ENCODE measurements at regions of chr21 and their contacts with region 1.

Region 1: DNA sequence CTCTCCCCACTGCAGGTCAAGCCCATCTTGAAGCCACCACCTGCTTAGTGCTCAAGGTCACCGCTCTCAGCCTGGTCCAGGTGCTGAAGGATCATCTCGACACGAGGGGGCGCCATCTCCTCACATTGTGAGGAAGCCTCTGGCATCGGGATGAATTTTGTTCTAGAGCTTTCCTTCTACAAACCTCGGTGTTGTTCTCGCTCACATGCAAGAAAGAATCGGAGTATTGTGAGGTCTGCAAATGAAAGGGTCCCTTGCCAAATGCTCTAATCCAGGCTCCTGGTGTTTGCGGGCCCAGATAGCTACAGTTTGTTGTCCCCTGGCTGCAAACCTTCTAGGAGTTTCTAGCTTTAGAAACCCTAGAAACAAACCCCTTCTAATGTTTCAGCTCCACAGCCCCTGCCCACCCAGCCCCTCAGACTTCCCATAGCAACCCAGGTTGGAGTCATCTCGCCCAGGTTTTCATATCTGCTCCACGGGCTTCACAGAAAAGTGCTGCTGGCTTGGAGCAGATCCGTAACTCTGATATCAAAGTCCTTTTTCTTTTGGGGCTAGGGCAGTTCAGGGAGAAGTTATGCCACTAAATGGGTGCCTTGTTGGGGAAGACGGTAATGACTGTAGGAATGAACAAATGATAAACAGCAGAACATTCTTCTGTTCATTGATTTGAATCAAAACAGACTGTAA is 8.6 kb upstream of the ATP5PO start:
- DNase-seq: peak; percentile 64 to 78
- ATAC-seq: peak; percentile 96 to 99
- H3K4me3 ChIP-seq: peak overlapping the region in 1 of 4 donors; percentile 19
- H3K27ac ChIP-seq: no peak overlapping the region
- H3K4me1 ChIP-seq: peaks cover 5 to 8% of the 10 kb centered on the region in 2 donors
- H3K27me3 ChIP-seq: no peaks in the 10 kb centered on the region
- CTCF ChIP-seq: peak; percentile 85 to 95 (median 91)
- POLR2A ChIP-seq: no peak

Region 2: DNA sequence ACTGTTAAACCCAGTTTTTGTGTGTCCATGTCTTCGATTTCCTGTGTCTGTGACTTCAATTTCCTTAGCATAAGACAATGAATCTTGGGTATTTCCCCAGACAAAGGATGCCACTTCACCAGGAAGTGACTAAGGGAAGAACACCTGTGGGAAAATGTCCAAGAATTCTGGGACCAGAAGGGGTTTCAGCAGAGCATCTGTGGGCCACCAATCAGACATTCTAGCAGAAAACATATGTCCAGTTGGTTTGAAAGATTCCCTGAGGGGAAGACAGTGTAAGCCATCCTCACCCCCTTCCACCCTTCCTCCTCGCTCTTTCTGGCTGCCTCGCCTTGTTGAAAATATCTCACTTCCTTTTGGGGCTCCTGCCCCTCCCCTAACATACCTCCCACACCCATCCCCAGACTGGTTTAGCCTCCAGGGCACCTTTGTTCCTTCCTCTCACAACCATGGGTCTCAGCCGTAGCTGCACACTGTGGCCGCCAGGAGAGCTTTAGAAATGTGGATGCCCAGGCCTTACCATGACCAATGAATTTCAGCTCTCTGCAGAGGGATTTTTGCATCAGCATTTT is 625.0 kb before region 1 on chr21:
- in situ Hi-C with region 1: no loop called
- intact Hi-C with region 1: no loop called
- DNase-seq: no peak
- ATAC-seq: no peak
- H3K4me3 ChIP-seq: no peak overlapping the region
- H3K27ac ChIP-seq: no peak overlapping the region
- H3K4me1 ChIP-seq: peaks cover 5 to 14% of the 10 kb centered on the region in 2 donors
- H3K27me3 ChIP-seq: no peaks in the 10 kb centered on the region
- CTCF ChIP-seq: no peak
- POLR2A ChIP-seq: no peak

Region 3: GRCh38 chr21:33844104-33844889 is 79.9 kb before region 1 on chr21:
- in situ Hi-C with region 1: no loop called
- intact Hi-C with region 1: no loop called
- DNase-seq: no peak
- ATAC-seq: no peak
- H3K4me3 ChIP-seq: no peak overlapping the region
- H3K27ac ChIP-seq: no peak overlapping the region
- H3K4me1 ChIP-seq: peaks cover 7 to 11% of the 10 kb centered on the region in 2 donors
- H3K27me3 ChIP-seq: no peaks in the 10 kb centered on the region
- CTCF ChIP-seq: no peak
- POLR2A ChIP-seq: no peak

Region 4: GRCh38 chr21:33854604-33855003 is 69.6 kb before region 1 on chr21:
- in situ Hi-C with region 1: no loop called
- intact Hi-C with region 1: no loop called
- DNase-seq: peak in 1 of 2 donors; percentile 2
- ATAC-seq: no peak
- H3K4me3 ChIP-seq: no peak overlapping the region
- H3K27ac ChIP-seq: peak overlapping the region in 1 of 4 donors; percentile 25
- H3K4me1 ChIP-seq: peaks cover 0 to 4% of the 10 kb centered on the region in 2 donors
- H3K27me3 ChIP-seq: no peaks in the 10 kb centered on the region
- CTCF ChIP-seq: no peak
- POLR2A ChIP-seq: no peak

Region 5: GRCh38 chr21:34113842-34114241 is 189.6 kb after region 1 on chr21:
- in situ Hi-C with region 1: no loop called
- intact Hi-C with region 1: no loop called
- DNase-seq: no peak
- ATAC-seq: no peak
- H3K4me3 ChIP-seq: no peak overlapping the region
- H3K27ac ChIP-seq: no peak overlapping the region
- H3K4me1 ChIP-seq: peaks cover 13 to 22% of the 10 kb centered on the region in 2 donors
- H3K27me3 ChIP-seq: no peaks in the 10 kb centered on the region
- CTCF ChIP-seq: no peak
- POLR2A ChIP-seq: no peak

Region 6: DNA sequence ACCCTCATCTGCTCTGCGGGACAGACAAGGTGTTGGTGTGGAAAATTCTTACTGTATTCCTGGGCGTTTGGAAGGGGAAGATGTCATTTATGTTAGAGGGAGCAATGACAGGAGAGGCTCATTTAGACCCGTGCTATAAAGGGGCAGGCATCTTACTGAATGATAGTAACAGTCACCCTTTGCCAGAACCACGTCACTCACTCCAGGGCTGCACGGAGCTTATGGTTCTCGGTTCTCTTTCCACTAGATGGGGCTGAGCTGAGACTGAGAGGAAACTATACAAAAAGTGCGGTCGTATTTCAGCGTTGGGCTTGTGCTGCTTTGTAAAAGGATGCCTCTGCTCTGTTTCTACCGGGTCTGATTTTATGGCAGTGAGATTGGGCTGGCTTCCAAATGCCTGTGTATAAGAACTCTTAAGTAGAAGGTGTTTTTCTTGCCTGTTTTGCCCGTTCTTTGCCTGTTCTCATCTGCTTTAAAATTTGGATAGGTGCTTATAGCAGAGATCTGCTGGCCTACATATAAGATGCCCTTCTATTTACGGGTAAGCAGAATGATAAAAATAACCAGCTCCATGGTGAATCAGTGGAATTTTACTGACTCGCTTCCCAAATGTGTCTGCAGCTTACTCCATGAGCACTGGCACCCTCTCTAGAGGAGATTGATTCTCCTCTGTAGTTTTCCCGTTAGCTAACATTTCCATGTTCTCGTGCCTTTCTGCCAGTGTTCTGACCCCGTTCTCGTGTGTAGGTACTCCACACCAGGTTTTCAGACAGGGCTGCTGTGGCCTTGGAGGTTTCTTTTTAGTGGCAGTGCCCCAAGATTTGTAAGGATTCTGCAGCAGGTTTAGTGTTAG is 205.0 kb after region 1 on chr21:
- in situ Hi-C with region 1: no loop called
- intact Hi-C with region 1: loop called (anchors 5 kb)
- DNase-seq: peak; percentile 74 to 81
- ATAC-seq: peak; percentile 78 to 81
- H3K4me3 ChIP-seq: peak overlapping the region; percentile 30 to 41 (median 38)
- H3K27ac ChIP-seq: peak overlapping the region; percentile 79 to 95 (median 88)
- H3K4me1 ChIP-seq: peaks cover 71 to 92% of the 10 kb centered on the region in 2 donors
- H3K27me3 ChIP-seq: no peaks in the 10 kb centered on the region
- CTCF ChIP-seq: peak in 3 of 5 experiments; percentile 19 to 53 (median 50)
- POLR2A ChIP-seq: peak in 1 of 2 donors; percentile 2

Region 7: DNA sequence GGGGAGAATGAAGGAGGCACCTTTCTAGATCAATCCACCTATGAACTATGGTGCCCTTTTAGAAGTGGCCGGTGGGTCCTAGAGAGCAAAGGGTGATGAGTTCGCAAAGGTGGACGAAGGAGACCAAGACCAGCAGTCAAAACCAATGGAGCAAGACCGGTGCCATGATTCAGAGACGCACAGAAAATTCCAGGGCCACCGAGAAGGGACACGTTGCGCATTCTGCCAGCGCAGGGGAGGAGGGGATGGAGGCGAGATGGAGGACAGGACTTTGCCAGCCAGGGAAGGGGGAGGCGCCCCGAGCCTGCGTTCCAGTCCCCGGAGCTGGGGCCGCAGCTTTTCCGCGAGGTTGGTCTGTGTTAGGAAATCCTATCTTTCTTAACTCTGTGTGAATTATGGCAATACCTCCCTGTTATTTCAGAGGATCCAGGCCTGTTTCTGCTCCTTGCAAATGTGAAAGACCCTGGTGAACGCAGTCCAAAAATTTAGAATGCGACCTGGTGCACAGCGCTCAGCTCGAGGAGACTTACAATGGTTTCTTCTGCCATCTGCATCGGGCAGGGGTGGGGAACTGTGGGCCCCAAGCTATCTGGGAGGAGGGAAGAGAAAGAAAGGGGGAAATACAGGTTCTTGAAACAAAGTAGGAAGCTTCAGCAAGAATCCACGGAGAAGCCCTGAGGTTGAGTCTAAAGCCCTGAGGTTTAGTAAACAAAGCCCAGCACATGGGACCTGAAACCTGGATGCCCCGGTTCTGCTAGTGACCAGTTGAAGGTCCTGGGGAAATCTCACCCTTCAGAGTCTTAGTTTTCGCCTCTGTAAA is 278.5 kb after region 1 on chr21:
- in situ Hi-C with region 1: loop called in 1 of 4 experiments (anchors 10 kb)
- intact Hi-C with region 1: loop called (anchors 2 kb)
- DNase-seq: peak in 1 of 2 donors; percentile 43
- ATAC-seq: peak; percentile 10 to 27
- H3K4me3 ChIP-seq: peak overlapping the region in 3 of 4 donors; percentile 60 to 65 (median 62)
- H3K27ac ChIP-seq: peak overlapping the region; percentile 43 to 84 (median 68)
- H3K4me1 ChIP-seq: peaks cover 30 to 43% of the 10 kb centered on the region in 2 donors
- H3K27me3 ChIP-seq: no peaks in the 10 kb centered on the region
- CTCF ChIP-seq: no peak
- POLR2A ChIP-seq: no peak

Region 8: DNA sequence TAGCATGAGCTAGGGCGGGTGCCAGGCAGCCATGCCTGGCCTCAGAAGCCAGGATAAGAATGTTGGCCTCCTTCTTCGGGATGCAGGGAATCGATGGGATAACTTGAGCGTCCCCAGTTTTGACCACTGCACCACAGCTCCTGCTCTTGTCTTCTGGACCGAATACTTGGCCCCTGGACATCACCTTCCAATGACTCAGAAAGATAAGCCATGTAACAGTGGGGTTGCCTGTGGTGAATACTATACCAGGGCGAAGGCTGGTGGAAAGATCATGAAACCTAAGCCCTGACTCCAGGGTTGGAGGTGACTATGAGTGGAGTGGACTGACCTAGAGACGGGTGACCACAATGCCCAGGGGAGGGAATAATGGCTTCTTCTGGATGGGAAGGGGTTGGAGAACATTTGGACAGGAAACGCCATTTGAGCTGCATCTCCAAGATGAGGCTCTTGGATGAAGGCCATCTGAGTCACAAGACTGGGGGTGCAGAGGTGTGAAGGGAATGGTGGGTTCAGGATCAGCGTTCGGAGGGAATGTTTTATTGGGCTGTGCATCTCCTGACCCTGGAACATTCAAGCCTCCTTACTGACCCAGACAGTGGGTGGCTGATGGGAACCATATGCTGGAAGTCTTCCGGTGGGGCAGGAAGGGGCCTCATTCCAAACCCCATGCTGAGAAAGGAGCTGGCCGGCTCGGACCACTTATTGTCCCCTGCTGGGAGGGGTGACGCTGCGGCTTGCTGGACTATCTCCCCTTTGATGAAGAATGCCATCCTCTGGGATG is 421.1 kb after region 1 on chr21:
- in situ Hi-C with region 1: no loop called
- intact Hi-C with region 1: loop called (anchors 2 kb)
- DNase-seq: no peak
- ATAC-seq: no peak
- H3K4me3 ChIP-seq: no peak overlapping the region
- H3K27ac ChIP-seq: peak overlapping the region; percentile 13 to 51 (median 40)
- H3K4me1 ChIP-seq: peaks cover 12 to 27% of the 10 kb centered on the region in 2 donors
- H3K27me3 ChIP-seq: no peaks in the 10 kb centered on the region
- CTCF ChIP-seq: no peak
- POLR2A ChIP-seq: no peak

Measured in gastrocnemius medialis (tissue), 4 donors.